Posterior vena cava (tissue), 2 donors: ENCODE measurements at regions of chr3 and their contacts with region 1.

Region 1: DNA sequence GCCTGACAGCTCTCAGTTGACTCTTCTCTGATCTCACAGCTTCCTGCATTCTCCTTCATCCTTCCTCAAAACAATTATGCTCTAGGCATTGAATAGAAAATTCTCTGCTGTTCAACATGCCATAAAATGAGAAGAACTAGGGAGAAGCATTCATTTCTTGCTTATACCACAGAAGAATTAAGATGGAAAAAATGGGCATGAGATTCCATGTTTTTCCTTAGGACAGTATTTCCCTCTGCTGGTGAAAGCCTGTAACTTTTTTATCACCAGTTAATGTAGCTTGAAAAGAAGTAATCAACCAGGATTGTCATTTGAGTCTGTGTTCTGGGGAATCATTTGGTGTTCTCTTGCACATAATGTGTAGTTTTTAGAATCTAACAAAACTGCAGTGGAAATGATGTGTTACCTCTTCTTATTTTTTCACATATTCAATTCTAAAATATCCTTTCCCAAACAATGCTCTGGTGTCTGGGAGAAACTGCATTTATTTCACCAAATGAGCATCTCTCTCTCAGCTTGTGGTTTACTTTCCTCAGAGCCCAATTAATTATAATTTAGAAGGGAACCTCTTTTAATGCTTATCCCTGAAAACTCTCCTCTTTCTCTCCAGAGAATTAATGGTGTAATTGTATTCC is 92.8 kb upstream of the DCBLD2 start:
- DNase-seq: no peak

Region 2: DNA sequence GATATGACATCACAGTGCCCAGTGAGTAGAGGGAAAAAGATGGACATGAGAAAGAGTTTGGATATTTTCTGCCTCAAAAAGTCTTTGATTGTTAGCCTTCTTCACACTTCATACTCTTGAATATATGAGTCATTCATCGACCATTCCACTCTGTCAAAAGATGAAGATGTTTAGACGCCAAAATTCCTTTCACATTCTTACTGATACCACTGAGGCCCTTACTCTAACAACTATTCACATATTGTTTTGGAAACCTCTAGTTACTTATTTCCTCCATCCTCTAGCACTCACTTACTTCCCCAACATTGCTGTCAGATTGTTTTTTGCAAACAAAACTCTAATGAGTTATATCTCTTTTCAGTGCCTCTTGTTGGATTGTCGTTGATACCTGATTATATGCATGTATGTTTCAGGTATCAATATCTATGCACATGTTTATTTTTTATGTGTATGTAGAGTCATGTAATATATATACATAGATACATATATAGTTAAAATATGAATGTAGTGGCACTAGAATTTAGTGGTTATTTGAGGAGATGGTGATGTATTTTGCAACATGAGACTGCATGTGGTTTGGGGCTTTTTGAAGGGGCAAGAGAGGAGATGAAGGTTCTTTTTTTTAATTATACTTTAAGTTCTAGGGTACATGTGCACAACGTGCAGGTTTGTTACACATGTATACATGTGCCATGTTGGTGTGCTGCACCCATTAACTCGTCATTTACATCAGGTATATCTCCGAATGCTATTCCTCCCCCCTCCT is 770.2 kb before region 1 on chr3:
- intact Hi-C with region 1: no loop called
- DNase-seq: no peak

Region 3: DNA sequence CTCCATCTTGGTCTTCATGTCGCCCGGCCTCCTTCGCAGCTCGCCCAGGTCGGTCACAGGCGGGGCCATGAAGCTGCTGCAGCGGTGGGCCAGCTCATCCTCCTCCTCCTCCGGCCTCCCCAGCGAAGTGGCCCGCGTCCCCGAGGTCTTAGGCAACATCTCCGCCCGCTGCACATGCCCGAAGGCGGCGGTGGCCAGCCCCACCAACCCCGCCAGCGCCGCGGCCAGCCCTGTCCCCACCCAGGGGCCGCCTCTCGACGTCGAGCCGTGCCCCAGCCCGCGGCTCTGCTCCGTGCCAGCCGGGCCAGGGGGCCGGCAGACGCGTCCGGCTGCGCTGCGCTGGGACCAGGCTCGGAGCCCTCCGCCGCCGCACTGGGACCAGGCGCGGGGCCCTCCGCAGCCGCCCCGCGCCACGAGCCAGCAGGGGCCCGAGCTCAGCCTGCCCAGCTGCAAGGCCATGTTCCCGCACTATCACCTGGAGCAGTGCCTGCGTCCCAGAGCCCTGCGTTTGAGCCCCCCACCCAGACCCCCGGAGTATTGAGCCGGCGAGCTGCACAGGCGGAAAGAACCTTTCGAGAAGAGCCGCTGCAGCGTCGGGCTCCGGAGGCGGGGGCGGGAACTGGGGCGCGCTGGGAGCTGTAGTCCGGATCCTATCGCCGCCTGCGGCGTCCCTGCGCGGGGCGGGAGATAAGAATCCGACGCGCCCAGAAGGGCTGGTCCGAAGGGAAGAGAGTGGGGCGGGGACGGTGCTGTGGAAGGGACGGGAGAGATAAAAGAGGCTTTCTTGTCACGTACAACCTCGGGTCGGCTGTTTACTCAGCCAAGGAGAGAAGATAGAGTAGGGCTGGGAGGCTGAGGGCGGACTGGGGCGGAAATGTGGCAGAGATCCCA is 401.0 kb before region 1 on chr3 and contains the start of gene CPOX:
- intact Hi-C with region 1: loop called in 1 of 2 experiments (anchors 10 kb)
- DNase-seq: peak; percentile 97
- total RNA-seq, gene CPOX: 12.2 to 12.7 TPM

Region 4: GRCh38 chr3:98817547-98818041 is 176.7 kb before region 1 on chr3:
- intact Hi-C with region 1: loop called (anchors 2 to 5 kb)
- DNase-seq: no peak

Region 5: GRCh38 chr3:98824256-98824655 is 170.0 kb before region 1 on chr3:
- intact Hi-C with region 1: loop called (anchors 2 to 5 kb)
- DNase-seq: no peak